Activated T-helper 1 cell treated with anti-CD3 and anti-CD28 coated beads, Interleukin-12 subunit alpha, Interleukin-12 subunit beta, Interleukin-2, Interleukin-4 antibody, amounts not matched to agents 30 ng/mL and 10 ng/mL and 1 ng/mL, durations not matched to agents 14 hours and 24 hours and 36 hours (primary cell): ENCODE measurements at regions of chr7 and their contacts with region 1.

Region 1: GRCh38 chr7:105387621-105388372 is 924 bp downstream of the SRPK2 start:
- DNase-seq: peak; percentile 37
- H3K4me3 Mint-ChIP-seq: peak overlapping the region; percentile 95
- H3K27ac Mint-ChIP-seq: peak overlapping the region; percentile 63
- H3K4me1 Mint-ChIP-seq: peaks cover 29% of the 10 kb centered on the region
- H3K27me3 Mint-ChIP-seq: peaks cover 4% of the 10 kb centered on the region

Region 2: GRCh38 chr7:104943502-104944343 is 444.1 kb before region 1 on chr7:
- intact Hi-C with region 1: loop called (anchors 5 kb)
- DNase-seq: peak; percentile 70
- H3K4me3 Mint-ChIP-seq: peak overlapping the region; percentile 96
- H3K27ac Mint-ChIP-seq: peak overlapping the region; percentile 100
- H3K4me1 Mint-ChIP-seq: peaks cover 72% of the 10 kb centered on the region
- H3K27me3 Mint-ChIP-seq: peaks cover 2% of the 10 kb centered on the region

Region 3: DNA sequence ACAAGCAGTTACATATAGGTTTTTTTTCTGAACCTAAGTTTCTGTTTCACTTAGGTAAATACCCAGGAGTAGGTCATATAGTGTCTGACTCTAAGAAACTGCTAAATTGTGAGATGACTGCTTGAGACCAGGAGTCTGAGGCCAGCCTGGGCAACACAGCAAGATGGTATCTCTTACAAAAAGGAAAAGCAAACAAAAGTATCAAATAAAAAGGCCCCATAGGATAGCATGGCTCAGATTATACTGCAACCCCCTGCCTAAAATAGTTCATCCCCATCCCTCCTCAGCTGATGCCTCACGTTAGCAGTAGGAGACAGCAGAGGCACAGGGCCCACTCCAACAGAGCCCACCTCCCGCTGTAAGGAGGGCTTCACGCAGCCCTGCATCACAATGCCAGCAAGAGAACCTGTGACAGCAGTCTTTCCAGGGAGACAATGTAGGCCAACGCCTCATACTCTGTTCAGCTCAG is 89.3 kb before region 1 on chr7:
- intact Hi-C with region 1: loop called (anchors 2 kb)
- DNase-seq: no peak
- H3K4me3 Mint-ChIP-seq: peak overlapping the region; percentile 19
- H3K27ac Mint-ChIP-seq: peak overlapping the region; percentile 82
- H3K4me1 Mint-ChIP-seq: peaks cover 53% of the 10 kb centered on the region
- H3K27me3 Mint-ChIP-seq: no peaks in the 10 kb centered on the region

Region 4: DNA sequence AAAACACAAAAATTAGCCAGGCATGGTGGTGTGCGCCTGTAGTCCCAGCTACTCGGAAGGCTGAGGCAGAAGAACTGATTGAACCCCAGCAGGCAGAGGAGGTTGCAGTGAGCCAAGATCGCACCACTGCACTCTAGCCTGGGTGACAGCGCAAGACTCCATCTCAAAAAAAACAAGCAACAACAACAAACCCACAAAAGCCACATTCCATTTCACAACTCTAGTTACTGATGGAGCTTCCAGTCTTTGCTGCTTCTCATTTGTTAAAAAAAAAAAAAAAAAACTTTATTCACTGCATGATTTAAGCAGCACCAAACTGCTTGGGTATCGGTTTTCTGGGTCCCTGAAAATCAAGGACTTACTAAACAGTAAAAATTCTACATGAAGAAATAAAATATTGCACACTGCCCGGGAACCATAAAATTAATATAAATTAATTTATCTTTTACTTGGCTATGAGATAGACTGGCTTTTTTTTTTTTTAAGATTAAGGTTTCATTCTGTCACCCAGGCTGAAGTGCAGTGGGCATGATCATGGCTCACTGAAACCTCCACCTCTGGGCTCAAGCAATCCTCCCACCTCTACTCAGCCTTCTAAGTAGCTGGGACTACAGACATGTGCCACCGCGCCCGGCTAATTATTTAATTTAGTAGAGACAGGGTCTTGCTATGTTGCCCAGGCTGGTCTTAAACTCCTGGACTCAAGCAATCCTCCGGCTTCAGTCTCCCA is 41.0 kb before region 1 on chr7:
- intact Hi-C with region 1: no loop called
- DNase-seq: peak; percentile 35
- H3K4me3 Mint-ChIP-seq: peak overlapping the region; percentile 42
- H3K27ac Mint-ChIP-seq: peak overlapping the region; percentile 52
- H3K4me1 Mint-ChIP-seq: peaks cover 40% of the 10 kb centered on the region
- H3K27me3 Mint-ChIP-seq: no peaks in the 10 kb centered on the region

Region 5: DNA sequence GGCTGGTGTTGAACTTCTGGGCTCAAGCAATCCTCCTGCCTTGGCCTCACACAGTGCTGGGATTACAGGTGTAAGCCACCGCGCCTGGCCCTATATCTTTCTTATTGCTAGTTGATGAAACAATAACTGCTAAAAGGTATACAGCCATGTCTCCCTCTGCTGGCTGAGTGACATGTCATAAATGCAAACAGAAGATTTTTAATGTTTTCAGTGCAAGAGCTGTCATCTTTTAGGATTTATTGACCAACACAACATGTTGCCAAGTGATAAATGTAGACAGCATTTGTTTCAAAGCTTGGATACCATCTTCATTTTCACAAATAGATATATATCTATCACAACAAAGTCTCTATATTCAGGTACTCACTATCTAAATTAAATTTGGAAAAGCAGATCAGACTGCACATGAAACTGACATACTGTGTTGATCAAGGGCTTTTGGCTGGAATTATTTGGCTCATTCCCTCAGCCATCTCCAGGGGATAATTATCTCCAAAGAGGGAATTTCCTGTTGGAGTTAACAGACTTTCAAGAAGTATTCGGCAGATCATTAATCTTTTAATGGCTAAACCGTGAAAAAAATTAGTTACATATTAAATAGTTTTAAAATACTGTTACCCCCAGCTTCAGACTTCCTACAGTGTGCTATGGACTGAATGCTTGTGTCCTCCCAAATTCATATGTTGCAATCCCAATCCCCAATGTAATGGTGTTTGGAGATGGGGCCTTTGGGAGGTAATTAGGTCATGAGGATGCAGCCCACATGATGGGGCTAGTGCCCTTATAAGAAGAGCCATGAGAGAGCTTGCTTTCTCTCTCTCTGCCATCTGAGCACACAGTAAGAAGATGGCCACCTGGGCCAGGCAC is 42.2 kb after region 1 on chr7:
- intact Hi-C with region 1: loop called (anchors 2 kb)
- DNase-seq: peak; percentile 19
- H3K4me3 Mint-ChIP-seq: no peak overlapping the region
- H3K27ac Mint-ChIP-seq: no peak overlapping the region
- H3K4me1 Mint-ChIP-seq: peaks cover 12% of the 10 kb centered on the region
- H3K27me3 Mint-ChIP-seq: no peaks in the 10 kb centered on the region